Caco-2 (cell line): ENCODE measurements at regions of chr4 and their contacts with region 1.

Region 1: DNA sequence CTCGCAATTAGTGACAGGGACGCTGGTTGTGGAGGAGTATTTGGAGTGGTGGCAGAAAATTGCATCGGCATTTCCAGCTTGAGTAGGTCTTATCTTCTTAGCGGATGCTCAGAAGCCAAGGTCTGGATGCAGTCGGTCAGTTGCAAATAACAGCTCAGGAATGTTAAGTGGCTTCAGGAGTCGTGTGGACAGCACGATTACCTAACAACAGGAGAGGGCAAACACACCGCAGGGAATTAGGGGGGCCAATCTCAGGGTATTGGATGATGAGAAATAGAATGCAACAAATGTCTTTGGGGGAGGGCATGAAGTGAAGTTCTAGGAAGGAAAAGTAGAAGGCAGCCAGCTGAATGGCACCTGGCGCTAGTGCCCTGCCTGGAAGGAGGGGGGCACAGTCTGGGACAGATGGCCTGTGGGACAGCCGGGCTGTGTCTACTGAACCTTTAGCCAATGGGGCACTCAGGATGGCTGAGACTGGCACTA is 11.8 kb downstream of the RASL11B start:
- DNase-seq: peak; percentile 41 to 56
- H3K4me3 ChIP-seq: no peak overlapping the region
- H3K4me3 Mint-ChIP-seq: no peak overlapping the region
- H3K27ac Mint-ChIP-seq: no peak overlapping the region
- H3K4me1 ChIP-seq: 0 out of 2 replicates have a peak, but pooled peaks cover 5% of the 10 kb centered on the region
- H3K4me1 Mint-ChIP-seq: peaks cover 11% of the 10 kb centered on the region
- H3K27me3 ChIP-seq: no peaks in the 10 kb centered on the region
- H3K27me3 Mint-ChIP-seq: no peaks in the 10 kb centered on the region
- CTCF ChIP-seq: no peak

Region 2: DNA sequence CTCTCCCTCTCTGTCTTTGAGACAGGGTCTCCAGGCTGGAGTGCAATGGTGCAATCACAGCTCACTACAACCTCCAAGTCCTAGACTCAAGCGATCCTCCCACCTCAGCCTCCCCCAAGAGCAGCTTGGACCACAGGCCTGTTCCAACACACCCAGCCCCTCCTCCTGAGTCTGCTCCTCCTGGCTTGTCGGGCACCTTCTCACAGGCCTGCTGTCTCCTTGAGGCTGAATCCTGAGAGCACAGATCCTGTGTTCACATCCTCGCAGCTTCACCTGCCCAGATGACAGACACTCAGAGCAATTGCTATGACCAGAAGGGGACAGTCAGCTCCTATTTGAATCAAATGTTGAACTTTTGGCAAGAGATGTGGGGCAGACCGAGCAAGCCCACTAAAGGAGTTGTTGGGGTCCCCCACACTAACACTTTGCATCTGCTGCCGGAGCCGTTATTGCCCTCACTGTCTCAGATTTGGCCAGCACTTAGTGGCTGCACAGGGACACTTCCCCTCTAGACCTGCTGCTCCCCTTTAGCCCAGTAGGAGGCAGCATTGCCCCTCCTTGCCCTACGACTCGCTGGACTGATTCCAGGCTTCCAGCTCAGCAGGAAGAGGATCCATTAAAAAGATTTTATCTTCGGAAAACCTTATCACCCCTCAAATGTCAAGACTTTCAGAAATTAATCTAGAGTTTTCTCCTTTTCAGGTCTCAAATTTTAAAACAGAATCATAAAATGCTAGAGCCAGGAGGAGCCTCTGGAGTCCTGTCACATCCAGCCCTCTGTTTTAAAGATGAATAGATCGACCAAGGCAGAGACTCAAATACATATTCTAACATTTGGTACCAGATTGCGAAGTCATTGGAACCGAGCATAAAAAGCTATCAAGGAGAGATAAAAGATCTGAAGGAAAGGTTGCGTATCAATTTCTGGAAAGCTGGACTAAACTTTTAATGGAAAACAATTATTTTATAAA is 328.5 kb before region 1 on chr4:
- CTCF ChIA-PET with region 1: no interaction called
- POLR2A ChIA-PET with region 1: no interaction called
- intact Hi-C with region 1: loop called (anchors 10 kb)
- DNase-seq: peak; percentile 49 to 74
- H3K4me3 ChIP-seq: no peak overlapping the region
- H3K4me3 Mint-ChIP-seq: no peak overlapping the region
- H3K27ac Mint-ChIP-seq: no peak overlapping the region
- H3K4me1 ChIP-seq: no peaks in the 10 kb centered on the region
- H3K4me1 Mint-ChIP-seq: no peaks in the 10 kb centered on the region
- H3K27me3 ChIP-seq: no peaks in the 10 kb centered on the region; the same call in none of the 2 replicates
- H3K27me3 Mint-ChIP-seq: no peaks in the 10 kb centered on the region
- CTCF ChIP-seq: peak; percentile 84

Region 3: GRCh38 chr4:52853351-52853750 is 20.6 kb before region 1 on chr4:
- CTCF ChIA-PET with region 1: no interaction called
- POLR2A ChIA-PET with region 1: no interaction called
- intact Hi-C with region 1: no loop called
- DNase-seq: no peak
- H3K4me3 ChIP-seq: no peak overlapping the region
- H3K4me3 Mint-ChIP-seq: no peak overlapping the region
- H3K27ac Mint-ChIP-seq: no peak overlapping the region
- H3K4me1 ChIP-seq: peaks cover 36% of the 10 kb centered on the region
- H3K4me1 Mint-ChIP-seq: peaks cover 25% of the 10 kb centered on the region
- H3K27me3 ChIP-seq: no peaks in the 10 kb centered on the region
- H3K27me3 Mint-ChIP-seq: no peaks in the 10 kb centered on the region
- CTCF ChIP-seq: no peak

Region 4: GRCh38 chr4:53119680-53120079 is 245.8 kb after region 1 on chr4:
- CTCF ChIA-PET with region 1: no interaction called
- POLR2A ChIA-PET with region 1: no interaction called
- intact Hi-C with region 1: no loop called
- DNase-seq: peak; percentile 65 to 75
- H3K4me3 ChIP-seq: no peak overlapping the region
- H3K4me3 Mint-ChIP-seq: no peak overlapping the region
- H3K27ac Mint-ChIP-seq: peak overlapping the region; percentile 79
- H3K4me1 ChIP-seq: peaks cover 37% of the 10 kb centered on the region
- H3K4me1 Mint-ChIP-seq: no peaks in the 10 kb centered on the region
- H3K27me3 ChIP-seq: no peaks in the 10 kb centered on the region
- H3K27me3 Mint-ChIP-seq: no peaks in the 10 kb centered on the region
- CTCF ChIP-seq: no peak

Region 5: DNA sequence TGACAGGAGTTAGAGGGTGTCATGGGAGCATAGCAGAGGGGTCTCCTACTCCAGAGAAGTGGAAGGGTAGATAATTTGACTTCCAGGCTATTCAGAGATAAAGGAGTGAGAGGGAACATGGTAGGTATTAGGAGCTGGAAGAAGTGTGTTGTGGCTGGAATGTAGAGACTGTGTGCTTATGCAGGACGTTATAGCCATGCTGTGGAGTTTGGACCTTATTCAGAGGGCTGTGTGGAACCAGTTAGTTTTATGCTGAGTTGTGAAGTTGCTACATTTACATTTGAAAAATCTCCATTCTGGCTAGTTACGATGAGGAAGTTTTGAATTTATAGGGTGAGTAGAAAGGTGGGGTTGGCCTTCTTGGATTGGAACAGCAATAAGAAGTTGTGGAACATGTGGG is 571.1 kb after region 1 on chr4:
- CTCF ChIA-PET with region 1: no interaction called
- POLR2A ChIA-PET with region 1: no interaction called
- intact Hi-C with region 1: no loop called
- DNase-seq: no peak
- H3K4me3 ChIP-seq: no peak overlapping the region
- H3K4me3 Mint-ChIP-seq: no peak overlapping the region
- H3K27ac Mint-ChIP-seq: no peak overlapping the region
- H3K4me1 ChIP-seq: no peaks in the 10 kb centered on the region
- H3K4me1 Mint-ChIP-seq: peaks cover 13% of the 10 kb centered on the region
- H3K27me3 ChIP-seq: no peaks in the 10 kb centered on the region
- H3K27me3 Mint-ChIP-seq: no peaks in the 10 kb centered on the region
- CTCF ChIP-seq: no peak